ENCODE measurements at regions of chr19 and their contacts with region 1.

Region 1: DNA sequence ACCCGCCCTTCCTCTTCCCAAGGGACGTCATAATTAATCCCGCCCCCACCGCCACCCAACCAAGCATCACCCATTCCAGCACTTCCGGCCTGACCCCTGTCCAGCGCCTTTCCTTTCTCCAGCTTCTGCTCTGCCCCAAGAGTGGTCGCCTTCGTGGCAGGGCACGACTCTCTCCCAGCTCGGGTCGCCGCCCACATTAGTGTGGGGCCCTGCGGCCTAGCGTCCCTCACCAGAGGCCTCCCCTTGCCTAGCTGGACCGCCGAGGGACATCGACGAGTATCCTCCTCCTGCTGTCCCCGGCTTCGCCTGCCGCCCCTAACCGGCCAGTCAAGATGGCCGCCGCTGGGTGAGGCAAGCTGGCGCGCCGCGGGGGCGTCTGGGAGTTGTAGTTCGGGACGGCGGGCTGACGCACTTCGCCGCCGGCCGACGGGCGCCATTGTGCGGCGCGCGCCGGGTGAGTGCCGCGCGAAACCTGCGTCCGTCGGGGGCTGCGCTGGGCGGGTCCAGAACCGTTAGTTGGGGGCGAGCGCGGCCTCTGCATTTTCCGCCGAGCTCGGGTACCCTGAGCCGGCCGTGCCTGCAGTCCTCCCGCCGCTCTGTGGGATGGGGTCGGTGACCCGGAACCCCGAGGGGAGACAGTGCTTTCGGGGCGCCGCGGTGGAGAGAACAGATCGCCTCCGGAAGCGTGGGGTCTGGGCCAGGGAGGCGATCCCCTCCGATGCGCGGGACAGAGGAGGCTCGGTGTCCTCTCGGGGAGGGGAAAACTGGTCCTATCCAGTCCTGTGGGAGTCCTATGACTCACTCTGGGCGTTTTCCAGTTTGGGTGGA is at the start of gene ZNF274:
- DNase-seq: peak; percentile 84 to 92
- ATAC-seq: peak; percentile 92 to 95
- H3K4me3 ChIP-seq: peak within 1 kb of the TSS; percentile 82 to 94 (median 92)
- H3K27ac ChIP-seq: peak within 1 kb of the TSS; percentile 92 to 99 (median 98)
- H3K4me1 ChIP-seq: peaks cover 0 to 5% of the 10 kb centered on the region in 2 donors
- H3K27me3 ChIP-seq: no peaks in the 10 kb centered on the region
- CTCF ChIP-seq: no peak
- POLR2A ChIP-seq: peak; percentile 88 to 94
- total RNA-seq, gene ZNF274: 9.0 to 20.7 (median 13.4) TPM

Region 2: GRCh38 chr19:57240311-57241090 is 942.7 kb before region 1 on chr19 and contains the start of gene ZNF805:
- in situ Hi-C with region 1: no loop called
- intact Hi-C with region 1: no loop called
- DNase-seq: peak; percentile 94 to 97
- ATAC-seq: peak; percentile 98 to 99
- H3K4me3 ChIP-seq: peak within 1 kb of the TSS; percentile 93 to 98 (median 97)
- H3K27ac ChIP-seq: peak within 1 kb of the TSS; percentile 89 to 97 (median 96)
- H3K4me1 ChIP-seq: peaks cover 23% of the 10 kb centered on the region in 2 donors
- H3K27me3 ChIP-seq: no peaks in the 10 kb centered on the region
- CTCF ChIP-seq: peak in 3 of 5 experiments; percentile 29 to 38 (median 36)
- POLR2A ChIP-seq: peak; percentile 62 to 67
- total RNA-seq, gene ZNF805: 9.3 to 20.2 (median 14.8) TPM

Region 3: DNA sequence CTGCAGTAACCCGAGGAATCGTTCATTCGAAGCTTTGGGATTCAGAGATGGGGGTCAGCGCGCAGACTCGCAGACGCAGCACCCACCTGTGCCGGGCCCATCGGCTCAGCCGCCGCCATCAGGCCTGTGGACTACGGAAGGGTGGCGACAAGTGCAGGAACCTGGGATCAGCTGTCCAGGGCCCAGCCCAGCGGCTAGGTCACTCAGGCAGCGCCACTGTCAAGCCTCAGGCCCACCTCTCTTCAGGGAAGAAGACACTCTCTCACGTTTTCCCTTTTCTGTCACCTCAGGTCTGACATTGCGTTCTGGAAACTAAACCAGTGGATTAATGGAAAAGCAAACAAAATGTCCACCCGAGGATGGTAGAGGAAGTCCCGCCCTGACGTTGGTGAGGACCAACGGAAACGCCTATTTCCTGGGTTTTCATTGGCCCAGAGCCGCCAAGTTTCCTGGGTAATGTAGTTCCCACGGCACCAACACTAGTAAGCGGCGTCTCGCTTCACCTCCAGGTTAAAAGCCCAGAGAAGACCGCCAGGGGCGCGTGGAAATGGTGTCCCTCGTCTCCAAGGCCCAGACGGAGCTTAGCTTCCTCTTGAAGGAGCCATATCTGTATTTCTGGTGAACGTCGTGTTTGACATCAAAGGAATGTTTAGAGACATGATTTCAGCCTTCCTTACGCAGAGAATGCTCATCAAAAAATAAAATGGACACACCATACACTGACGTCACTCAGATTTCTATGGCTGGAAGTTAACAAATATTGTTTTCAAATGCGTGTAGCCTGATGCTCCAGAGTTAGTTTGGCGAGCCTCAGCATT is 705.8 kb before region 1 on chr19 and contains the start of gene ZNF772:
- in situ Hi-C with region 1: no loop called
- intact Hi-C with region 1: loop called (anchors 10 kb)
- DNase-seq: peak; percentile 89 to 91
- ATAC-seq: peak; percentile 100
- H3K4me3 ChIP-seq: peak within 1 kb of the TSS; percentile 79 to 84 (median 81)
- H3K27ac ChIP-seq: peak within 1 kb of the TSS; percentile 79 to 91 (median 86)
- H3K4me1 ChIP-seq: peaks cover 12 to 13% of the 10 kb centered on the region in 2 donors
- H3K27me3 ChIP-seq: no peaks in the 10 kb centered on the region
- CTCF ChIP-seq: peak; percentile 47 to 70 (median 61)
- POLR2A ChIP-seq: peak in 1 of 2 donors; percentile 20
- total RNA-seq, gene ZNF772: 8.3 to 26.7 (median 17.6) TPM

Region 4: DNA sequence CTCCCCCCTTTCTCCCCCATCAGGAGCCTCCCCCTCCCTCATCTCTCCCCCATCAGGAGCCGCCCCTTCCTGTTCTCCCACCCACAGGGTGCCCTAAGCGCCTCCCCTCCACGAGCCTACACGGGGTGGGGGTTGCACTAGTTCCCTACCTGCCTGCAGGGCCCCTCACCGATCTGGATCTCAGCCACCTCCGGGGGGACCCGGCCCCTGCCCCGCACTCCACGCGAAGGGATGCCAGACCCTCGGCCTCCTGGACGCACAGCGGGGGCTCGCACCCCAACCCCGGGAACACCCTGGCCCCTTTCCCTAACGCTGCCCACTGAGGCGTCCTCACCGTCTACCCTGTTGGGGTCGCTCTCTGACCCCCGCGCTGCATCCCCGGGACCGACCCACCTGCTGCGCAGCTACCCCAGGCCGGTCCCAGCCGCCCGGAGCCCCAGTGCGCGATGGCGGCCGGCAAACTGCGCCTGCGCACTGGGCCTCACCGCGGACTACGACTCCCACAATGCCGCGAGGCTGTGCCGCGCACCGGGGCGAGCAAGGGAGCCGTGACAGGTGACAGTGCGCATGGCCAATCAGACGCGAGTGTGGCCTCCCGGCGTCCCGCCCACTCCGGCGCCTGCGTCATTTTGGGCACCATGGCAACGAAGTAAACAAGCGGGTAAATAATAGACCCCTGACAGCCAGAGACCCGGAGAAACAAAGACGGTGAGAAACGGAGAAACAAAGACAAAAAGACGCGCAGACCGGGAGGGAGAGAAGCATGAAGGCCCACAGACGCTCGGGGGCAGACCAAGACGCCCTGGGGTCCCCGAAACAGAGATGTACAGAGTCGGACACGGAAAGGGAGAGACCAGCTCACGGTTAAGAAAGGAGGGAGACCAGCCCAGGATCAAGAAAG is 85.2 kb before region 1 on chr19 and contains the start of gene ZSCAN18:
- in situ Hi-C with region 1: no loop called
- intact Hi-C with region 1: loop called (anchors 1 kb)
- DNase-seq: peak; percentile 89 to 92
- ATAC-seq: peak; percentile 98 to 99
- H3K4me3 ChIP-seq: peak within 1 kb of the TSS; percentile 85 to 99 (median 98)
- H3K27ac ChIP-seq: peak within 1 kb of the TSS; percentile 83 to 89 (median 86)
- H3K4me1 ChIP-seq: peaks cover 5 to 9% of the 10 kb centered on the region in 2 donors
- H3K27me3 ChIP-seq: no peaks in the 10 kb centered on the region
- CTCF ChIP-seq: no peak
- POLR2A ChIP-seq: peak; percentile 28 to 35
- total RNA-seq, gene ZSCAN18: 11.2 to 20.6 (median 15.2) TPM

Region 5: GRCh38 chr19:58228585-58229254 is 45.5 kb after region 1 on chr19 and contains the start of gene ZNF544:
- in situ Hi-C with region 1: no loop called
- intact Hi-C with region 1: loop called (anchors 2 kb)
- DNase-seq: peak; percentile 9 to 23
- ATAC-seq: peak in 1 of 2 donors; percentile 49
- H3K4me3 ChIP-seq: peak within 1 kb of the TSS; percentile 71 to 89 (median 76)
- H3K27ac ChIP-seq: peak within 1 kb of the TSS; percentile 64 to 73 (median 69)
- H3K4me1 ChIP-seq: peaks cover 6 to 16% of the 10 kb centered on the region in 2 donors
- H3K27me3 ChIP-seq: peaks cover 0 to 3% (median 0%) of the 10 kb centered on the region in 3 donors
- CTCF ChIP-seq: no peak
- POLR2A ChIP-seq: no peak
- total RNA-seq, gene ZNF544: 3.8 to 9.5 (median 6.0) TPM

Measured in gastrocnemius medialis (tissue), 4 donors.